ENCODE measurements at regions of chr4 and their contacts with region 1.

Region 1: DNA sequence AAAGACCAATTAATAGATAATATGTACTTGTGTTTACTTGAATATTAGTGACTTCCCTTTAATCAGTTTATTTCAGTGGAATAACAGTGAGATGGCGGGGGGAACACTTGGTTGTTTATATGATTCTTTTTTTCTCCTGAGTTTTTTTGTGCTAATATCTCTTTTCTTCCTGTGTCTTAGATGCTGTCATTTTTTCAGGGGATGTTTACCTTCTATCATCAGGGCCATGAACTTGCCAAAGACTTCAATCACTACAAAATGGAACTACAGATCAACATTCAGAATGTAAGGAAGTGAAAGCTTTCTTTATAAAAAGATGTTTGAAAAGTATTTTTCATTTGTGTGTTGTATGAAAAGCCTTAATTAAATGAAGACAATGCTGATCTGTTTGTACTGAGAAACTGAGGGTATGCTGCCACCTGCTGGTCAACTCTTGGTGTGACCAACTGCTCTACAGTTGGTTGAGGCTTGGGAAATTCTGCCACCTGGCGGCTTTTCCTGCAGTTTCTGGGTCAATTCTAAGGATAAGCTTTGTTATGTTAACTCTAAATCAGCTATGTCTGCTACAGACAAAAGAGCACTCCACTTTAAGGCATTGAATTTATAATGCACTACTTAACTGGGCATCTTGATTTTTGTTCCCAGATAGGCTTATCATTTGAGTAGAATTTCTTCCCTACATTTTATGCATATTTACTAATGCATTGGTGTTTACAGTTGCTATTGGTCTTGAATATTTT is 134.8 kb downstream of the ARHGAP10 start:
- DNase-seq: peak; percentile 77 to 92 (median 87)
- H3K4me3 ChIP-seq: no peak overlapping the region
- H3K4me3 Mint-ChIP-seq: no peak overlapping the region
- H3K27ac ChIP-seq: no peak overlapping the region
- H3K27ac Mint-ChIP-seq: peak overlapping the region in 2 of 8 donors; percentile 14 to 29
- H3K4me1 ChIP-seq: no peaks in the 10 kb centered on the region
- H3K4me1 Mint-ChIP-seq: peaks cover 0 to 4% (median 0%) of the 10 kb centered on the region in 3 donors
- H3K27me3 ChIP-seq: no peaks in the 10 kb centered on the region
- H3K27me3 Mint-ChIP-seq: no peaks in the 10 kb centered on the region

Region 2: GRCh38 chr4:147518846-147519767 is 347.6 kb before region 1 on chr4:
- CTCF ChIA-PET with region 1: interaction called, 17 read pairs
- POLR2A ChIA-PET with region 1: no interaction called
- DNase-seq: peak in 4 of 5 donors; percentile 4 to 53 (median 18)
- H3K4me3 ChIP-seq: no peak overlapping the region
- H3K4me3 Mint-ChIP-seq: no peak overlapping the region
- H3K27ac ChIP-seq: no peak overlapping the region
- H3K27ac Mint-ChIP-seq: no peak overlapping the region
- H3K4me1 ChIP-seq: no peaks in the 10 kb centered on the region
- H3K4me1 Mint-ChIP-seq: no peaks in the 10 kb centered on the region
- H3K27me3 ChIP-seq: no peaks in the 10 kb centered on the region
- H3K27me3 Mint-ChIP-seq: peaks cover 6 to 33% of the 10 kb centered on the region in 2 donors

Region 3: DNA sequence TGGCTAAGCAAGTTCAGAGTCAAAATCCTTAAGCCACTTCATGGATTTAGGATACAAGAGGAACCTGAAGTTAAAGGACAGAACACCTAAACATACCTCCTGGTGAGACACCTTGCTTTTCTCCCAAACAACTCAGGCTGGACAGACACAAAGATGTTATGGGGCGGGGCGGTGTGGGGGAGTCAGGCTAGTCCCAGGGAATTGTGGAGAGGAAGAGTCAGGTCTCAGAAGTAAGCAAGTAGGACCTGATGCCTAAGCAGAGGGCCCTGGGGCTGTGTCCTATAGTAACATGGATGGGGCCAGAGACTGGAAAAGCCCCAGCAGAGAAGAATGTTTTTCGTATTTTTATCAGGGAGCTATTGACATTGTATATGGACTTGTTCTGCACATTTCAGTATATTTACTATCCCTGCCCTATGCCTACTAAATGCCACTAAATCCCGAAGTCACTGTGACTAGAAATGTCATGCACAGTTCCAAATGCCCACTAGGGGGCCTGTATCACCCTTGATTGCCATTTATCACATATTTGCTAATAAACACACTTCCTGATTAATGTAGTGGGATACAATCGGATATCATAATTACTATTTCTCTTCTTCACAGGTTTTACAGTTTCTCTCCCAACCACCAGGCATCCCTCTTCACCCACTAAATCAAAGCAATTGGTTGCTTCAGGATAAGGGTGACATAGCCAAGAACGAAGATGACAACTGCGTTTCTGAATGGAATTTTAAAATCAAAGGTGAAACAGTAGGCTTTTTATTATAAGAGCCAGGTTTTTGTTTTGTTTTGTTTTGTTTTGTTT is 158.6 kb before region 1 on chr4:
- CTCF ChIA-PET with region 1: interaction called, 89 read pairs
- POLR2A ChIA-PET with region 1: no interaction called
- DNase-seq: peak; percentile 36 to 65 (median 47)
- H3K4me3 ChIP-seq: no peak overlapping the region
- H3K4me3 Mint-ChIP-seq: no peak overlapping the region
- H3K27ac ChIP-seq: no peak overlapping the region
- H3K27ac Mint-ChIP-seq: no peak overlapping the region
- H3K4me1 ChIP-seq: no peaks in the 10 kb centered on the region
- H3K4me1 Mint-ChIP-seq: peaks cover 0 to 5% (median 4%) of the 10 kb centered on the region in 3 donors
- H3K27me3 ChIP-seq: no peaks in the 10 kb centered on the region
- H3K27me3 Mint-ChIP-seq: no peaks in the 10 kb centered on the region

Region 4: DNA sequence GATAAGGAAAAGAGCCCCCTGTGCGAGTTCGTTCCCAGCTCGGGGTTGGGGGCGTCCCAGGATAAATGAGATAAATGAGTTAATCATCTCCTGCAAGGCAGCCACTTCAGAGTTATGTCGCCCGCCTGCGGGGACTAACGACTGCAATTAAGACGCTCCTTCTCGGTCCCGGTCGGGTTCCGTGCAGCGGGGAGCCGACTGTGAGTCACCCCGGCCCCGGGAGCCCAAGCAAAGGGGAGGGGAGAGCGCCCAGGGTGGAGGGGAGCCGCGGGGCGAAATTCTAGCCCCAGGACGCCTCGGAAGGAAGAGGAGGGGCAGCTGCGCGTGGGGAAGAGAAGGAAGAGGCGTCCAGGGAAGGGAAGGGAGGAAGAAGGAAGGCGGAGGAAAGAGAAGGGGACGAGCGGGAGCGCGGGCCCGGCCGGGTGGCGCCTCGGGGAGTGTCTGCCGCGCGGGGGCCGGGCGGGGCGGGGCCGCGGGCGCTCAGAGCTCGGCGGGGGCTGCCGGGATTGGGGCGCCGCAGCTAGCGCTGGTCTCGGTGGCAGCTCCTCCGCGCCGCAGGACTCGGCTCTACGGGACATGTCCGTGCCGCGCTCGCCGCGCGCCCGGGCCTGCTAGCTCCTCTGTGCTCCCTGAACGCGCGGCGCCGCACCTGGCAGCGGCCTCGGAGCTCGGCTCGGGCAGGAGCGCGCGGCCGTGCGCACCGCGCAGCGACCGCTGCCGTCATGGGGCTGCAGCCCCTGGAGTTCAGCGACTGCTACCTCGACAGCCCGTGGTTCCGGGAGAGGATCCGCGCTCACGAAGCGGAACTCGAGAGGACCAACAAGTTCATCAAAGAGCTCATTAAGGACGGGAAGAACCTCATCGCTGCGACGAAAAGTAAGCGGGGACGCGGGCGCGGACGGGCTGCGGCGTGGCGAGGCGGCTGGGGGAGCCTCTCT is 134.9 kb before region 1 on chr4 and contains the start of gene ARHGAP10:
- CTCF ChIA-PET with region 1: interaction called, 34 read pairs
- POLR2A ChIA-PET with region 1: interaction called, 8 read pairs
- DNase-seq: peak; percentile 55 to 76 (median 61)
- H3K4me3 ChIP-seq: peak within 1 kb of the TSS; percentile 72
- H3K4me3 Mint-ChIP-seq: peak within 1 kb of the TSS; percentile 84 to 98 (median 93)
- H3K27ac ChIP-seq: peak within 1 kb of the TSS; percentile 47
- H3K27ac Mint-ChIP-seq: peak within 1 kb of the TSS; percentile 89 to 96 (median 93)
- H3K4me1 ChIP-seq: peaks cover 23% of the 10 kb centered on the region
- H3K4me1 Mint-ChIP-seq: peaks cover 40 to 50% (median 47%) of the 10 kb centered on the region in 3 donors
- H3K27me3 ChIP-seq: no peaks in the 10 kb centered on the region
- H3K27me3 Mint-ChIP-seq: no peaks in the 10 kb centered on the region
- total RNA-seq, gene ARHGAP10: 8.6 to 9.7 TPM

Region 5: DNA sequence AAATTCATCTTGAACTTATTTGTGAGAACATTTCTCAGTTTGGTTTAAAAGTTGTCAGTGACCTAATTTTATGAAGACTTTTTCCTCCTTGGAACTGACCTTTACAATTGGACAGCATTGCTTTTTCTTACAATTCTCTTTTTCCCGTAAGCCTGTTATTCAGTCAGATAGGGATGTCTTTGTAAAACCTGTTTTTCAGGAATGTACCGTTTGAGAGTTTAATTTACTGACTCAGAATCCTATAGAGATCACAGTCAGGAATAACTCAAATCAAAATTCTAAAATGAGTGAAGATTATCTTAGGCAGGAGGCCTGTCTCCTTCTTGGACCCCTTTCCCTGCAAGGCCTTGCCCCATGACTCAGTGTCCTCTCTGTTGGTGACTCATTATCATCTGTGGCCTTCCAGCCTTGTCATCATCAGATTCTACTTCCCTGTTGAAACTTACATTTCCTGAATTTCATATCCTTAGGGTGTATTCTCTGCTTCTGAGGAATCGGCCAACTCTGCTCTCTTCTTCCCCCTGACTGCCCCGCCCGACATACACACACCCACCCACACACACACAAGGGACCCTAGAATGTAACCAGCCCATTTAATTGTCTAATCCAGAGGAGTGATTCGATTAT is 35.0 kb before region 1 on chr4:
- CTCF ChIA-PET with region 1: interaction called, 11 read pairs
- POLR2A ChIA-PET with region 1: no interaction called
- DNase-seq: no peak
- H3K4me3 ChIP-seq: no peak overlapping the region
- H3K4me3 Mint-ChIP-seq: no peak overlapping the region
- H3K27ac ChIP-seq: no peak overlapping the region
- H3K27ac Mint-ChIP-seq: no peak overlapping the region
- H3K4me1 ChIP-seq: no peaks in the 10 kb centered on the region
- H3K4me1 Mint-ChIP-seq: peaks cover 13 to 22% (median 14%) of the 10 kb centered on the region in 3 donors
- H3K27me3 ChIP-seq: no peaks in the 10 kb centered on the region
- H3K27me3 Mint-ChIP-seq: no peaks in the 10 kb centered on the region

Region 6: GRCh38 chr4:147855571-147856009 is 11.1 kb before region 1 on chr4:
- CTCF ChIA-PET with region 1: interaction called, 20 read pairs
- POLR2A ChIA-PET with region 1: no interaction called
- DNase-seq: no peak
- H3K4me3 ChIP-seq: no peak overlapping the region
- H3K4me3 Mint-ChIP-seq: no peak overlapping the region
- H3K27ac ChIP-seq: no peak overlapping the region
- H3K27ac Mint-ChIP-seq: peak overlapping the region in 1 of 8 donors; percentile 21
- H3K4me1 ChIP-seq: no peaks in the 10 kb centered on the region
- H3K4me1 Mint-ChIP-seq: no peaks in the 10 kb centered on the region
- H3K27me3 ChIP-seq: no peaks in the 10 kb centered on the region
- H3K27me3 Mint-ChIP-seq: no peaks in the 10 kb centered on the region

Measured in CD8-positive, alpha-beta memory T cell (primary cell).